ENCODE measurements at regions of chr17 and their contacts with region 1.

Region 1: GRCh38 chr17:82098072-82098821 is at the start of gene FASN:
- DNase-seq: peak; percentile 81 to 96 (median 92)
- ATAC-seq: peak; percentile 61
- H3K4me3 ChIP-seq: peak within 1 kb of the TSS; percentile 48 to 74
- H3K4me3 Mint-ChIP-seq: peak within 1 kb of the TSS; percentile 74
- H3K27ac ChIP-seq: peak within 1 kb of the TSS; percentile 81 to 87
- H3K27ac Mint-ChIP-seq: peak within 1 kb of the TSS; percentile 41
- H3K4me1 ChIP-seq: peaks cover 20% of the 10 kb centered on the region
- H3K4me1 Mint-ChIP-seq: peaks cover 5% of the 10 kb centered on the region
- H3K27me3 ChIP-seq: no peaks in the 10 kb centered on the region
- H3K27me3 Mint-ChIP-seq: no peaks in the 10 kb centered on the region
- CTCF ChIP-seq: peak; percentile 13
- total RNA-seq, gene FASN: 245 to 263 TPM

Region 2: DNA sequence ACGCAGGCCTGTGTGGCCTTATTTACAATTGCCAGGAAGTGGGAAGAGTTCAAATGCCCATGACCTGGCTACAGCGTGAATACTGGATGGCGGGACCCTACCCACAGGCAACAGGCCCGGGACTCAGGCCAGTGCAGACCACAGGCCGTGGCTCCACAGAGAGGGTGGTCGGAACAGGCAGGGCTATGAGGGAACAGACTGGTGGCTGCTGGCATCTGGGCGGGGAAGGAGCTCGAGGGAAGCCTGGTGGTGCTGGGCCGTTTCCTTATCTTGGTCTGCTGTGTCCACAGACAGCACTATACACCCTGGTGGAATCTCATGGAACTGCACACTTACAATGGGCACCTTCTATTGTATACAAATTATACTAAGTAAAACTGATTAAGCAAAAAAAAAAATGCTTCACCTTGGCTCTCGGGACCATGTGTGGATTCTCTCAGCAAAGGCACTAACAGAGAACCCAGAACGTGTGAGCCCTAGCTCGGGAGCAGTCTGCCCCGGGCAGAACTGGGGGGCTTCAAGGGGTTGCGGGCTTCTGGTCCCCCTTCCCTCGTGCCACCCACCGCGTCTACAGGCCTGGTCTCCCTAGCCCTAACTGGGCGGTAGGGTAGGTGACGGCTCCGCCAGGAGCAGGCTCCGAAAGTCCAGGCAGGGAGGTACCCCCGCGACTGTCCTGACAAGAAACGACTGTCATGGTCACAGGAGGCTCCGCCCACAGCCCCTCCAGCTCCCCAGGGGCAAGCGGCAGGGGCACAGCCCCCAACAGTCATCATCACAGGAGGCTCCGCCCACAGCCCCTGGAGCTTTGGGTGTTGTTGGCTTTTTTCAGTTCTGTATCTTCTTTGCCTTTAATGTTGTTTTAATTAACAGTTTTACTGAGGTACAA is 897.3 kb before region 1 on chr17:
- CTCF ChIA-PET with region 1: no interaction called
- POLR2A ChIA-PET with region 1: no interaction called
- intact Hi-C with region 1: no loop called
- DNase-seq: peak in 3 of 9 experiments; percentile 18 to 38 (median 25)
- ATAC-seq: peak; percentile 65
- H3K4me3 ChIP-seq: no peak overlapping the region
- H3K4me3 Mint-ChIP-seq: no peak overlapping the region
- H3K27ac ChIP-seq: no peak overlapping the region
- H3K27ac Mint-ChIP-seq: no peak overlapping the region
- H3K4me1 ChIP-seq: no peaks in the 10 kb centered on the region
- H3K4me1 Mint-ChIP-seq: no peaks in the 10 kb centered on the region
- H3K27me3 ChIP-seq: no peaks in the 10 kb centered on the region
- H3K27me3 Mint-ChIP-seq: no peaks in the 10 kb centered on the region
- CTCF ChIP-seq: no peak

Region 3: GRCh38 chr17:81890447-81891299 is 207.6 kb before region 1 on chr17:
- CTCF ChIA-PET with region 1: no interaction called
- POLR2A ChIA-PET with region 1: no interaction called
- intact Hi-C with region 1: loop called in 1 of 2 experiments (anchors 5 kb)
- DNase-seq: peak in 3 of 9 experiments; percentile 26 to 52 (median 38)
- ATAC-seq: no peak
- H3K4me3 ChIP-seq: peak overlapping the region; percentile 51 to 53
- H3K4me3 Mint-ChIP-seq: peak overlapping the region; percentile 87
- H3K27ac ChIP-seq: peak overlapping the region; percentile 54 to 57
- H3K27ac Mint-ChIP-seq: peak overlapping the region; percentile 95
- H3K4me1 ChIP-seq: peaks cover 19% of the 10 kb centered on the region
- H3K4me1 Mint-ChIP-seq: peaks cover 23% of the 10 kb centered on the region
- H3K27me3 ChIP-seq: no peaks in the 10 kb centered on the region
- H3K27me3 Mint-ChIP-seq: no peaks in the 10 kb centered on the region
- CTCF ChIP-seq: no peak

Region 4: GRCh38 chr17:82051776-82052637 is 46.2 kb before region 1 on chr17 and contains the starts of genes GPS1 and RFNG:
- CTCF ChIA-PET with region 1: no interaction called
- POLR2A ChIA-PET with region 1: no interaction called
- intact Hi-C with region 1: loop called (anchors 1 kb)
- DNase-seq: peak; percentile 49 to 87 (median 82)
- ATAC-seq: peak; percentile 92
- H3K4me3 ChIP-seq: peak within 1 kb of the TSS; percentile 63 to 67
- H3K4me3 Mint-ChIP-seq: peak within 1 kb of the TSS; percentile 83
- H3K27ac ChIP-seq: peak within 1 kb of the TSS; percentile 25 to 30
- H3K27ac Mint-ChIP-seq: peak within 1 kb of the TSS; percentile 72
- H3K4me1 ChIP-seq: peaks cover 29% of the 10 kb centered on the region
- H3K4me1 Mint-ChIP-seq: peaks cover 18% of the 10 kb centered on the region
- H3K27me3 ChIP-seq: no peaks in the 10 kb centered on the region
- H3K27me3 Mint-ChIP-seq: no peaks in the 10 kb centered on the region
- CTCF ChIP-seq: no peak
- total RNA-seq, gene GPS1: 72.0 to 72.8 TPM
- total RNA-seq, gene RFNG: 26.2 to 27.2 TPM

Region 5: DNA sequence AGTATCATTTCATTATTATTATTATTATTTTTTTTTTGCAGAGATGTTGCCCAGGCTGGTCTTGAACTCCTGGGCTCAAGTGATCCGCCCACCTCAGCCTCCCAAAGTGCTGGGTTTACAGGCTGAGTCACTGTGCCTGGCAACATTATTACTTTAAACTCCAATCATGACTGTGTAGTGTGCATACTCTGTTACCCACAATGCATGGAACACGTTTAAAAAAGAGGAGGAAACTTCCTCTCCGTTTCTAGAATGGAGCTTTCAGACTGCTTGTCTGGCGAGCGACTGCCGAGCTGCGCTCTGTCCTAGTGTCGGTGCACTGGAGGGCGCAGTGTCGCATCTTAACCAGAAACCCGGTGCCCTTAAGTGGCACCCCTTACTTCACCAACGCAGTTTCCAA is 21.9 kb after region 1 on chr17:
- CTCF ChIA-PET with region 1: interaction called, 3 read pairs
- POLR2A ChIA-PET with region 1: interaction called, 10 read pairs
- intact Hi-C with region 1: no loop called
- DNase-seq: peak in 3 of 9 experiments; percentile 26 to 76 (median 40)
- ATAC-seq: peak; percentile 88
- H3K4me3 ChIP-seq: no peak overlapping the region
- H3K4me3 Mint-ChIP-seq: peak overlapping the region; percentile 56
- H3K27ac ChIP-seq: no peak overlapping the region
- H3K27ac Mint-ChIP-seq: peak overlapping the region; percentile 87
- H3K4me1 ChIP-seq: peaks cover 58% of the 10 kb centered on the region
- H3K4me1 Mint-ChIP-seq: peaks cover 59% of the 10 kb centered on the region
- H3K27me3 ChIP-seq: no peaks in the 10 kb centered on the region
- H3K27me3 Mint-ChIP-seq: no peaks in the 10 kb centered on the region
- CTCF ChIP-seq: peak; percentile 33

Region 6: GRCh38 chr17:82153745-82154375 is 55.6 kb after region 1 on chr17:
- CTCF ChIA-PET with region 1: interaction called, 5 read pairs
- POLR2A ChIA-PET with region 1: interaction called, 4 read pairs
- intact Hi-C with region 1: loop called (anchors 1 kb)
- DNase-seq: peak; percentile 71 to 92 (median 84)
- ATAC-seq: peak; percentile 100
- H3K4me3 ChIP-seq: no peak overlapping the region
- H3K4me3 Mint-ChIP-seq: no peak overlapping the region
- H3K27ac ChIP-seq: no peak overlapping the region
- H3K27ac Mint-ChIP-seq: peak overlapping the region; percentile 57
- H3K4me1 ChIP-seq: peaks cover 7% of the 10 kb centered on the region
- H3K4me1 Mint-ChIP-seq: peaks cover 5% of the 10 kb centered on the region
- H3K27me3 ChIP-seq: no peaks in the 10 kb centered on the region
- H3K27me3 Mint-ChIP-seq: no peaks in the 10 kb centered on the region
- CTCF ChIP-seq: peak; percentile 98